PC-3 (cell line): ENCODE measurements at regions of chr19 and their contacts with region 1.

Region 1: DNA sequence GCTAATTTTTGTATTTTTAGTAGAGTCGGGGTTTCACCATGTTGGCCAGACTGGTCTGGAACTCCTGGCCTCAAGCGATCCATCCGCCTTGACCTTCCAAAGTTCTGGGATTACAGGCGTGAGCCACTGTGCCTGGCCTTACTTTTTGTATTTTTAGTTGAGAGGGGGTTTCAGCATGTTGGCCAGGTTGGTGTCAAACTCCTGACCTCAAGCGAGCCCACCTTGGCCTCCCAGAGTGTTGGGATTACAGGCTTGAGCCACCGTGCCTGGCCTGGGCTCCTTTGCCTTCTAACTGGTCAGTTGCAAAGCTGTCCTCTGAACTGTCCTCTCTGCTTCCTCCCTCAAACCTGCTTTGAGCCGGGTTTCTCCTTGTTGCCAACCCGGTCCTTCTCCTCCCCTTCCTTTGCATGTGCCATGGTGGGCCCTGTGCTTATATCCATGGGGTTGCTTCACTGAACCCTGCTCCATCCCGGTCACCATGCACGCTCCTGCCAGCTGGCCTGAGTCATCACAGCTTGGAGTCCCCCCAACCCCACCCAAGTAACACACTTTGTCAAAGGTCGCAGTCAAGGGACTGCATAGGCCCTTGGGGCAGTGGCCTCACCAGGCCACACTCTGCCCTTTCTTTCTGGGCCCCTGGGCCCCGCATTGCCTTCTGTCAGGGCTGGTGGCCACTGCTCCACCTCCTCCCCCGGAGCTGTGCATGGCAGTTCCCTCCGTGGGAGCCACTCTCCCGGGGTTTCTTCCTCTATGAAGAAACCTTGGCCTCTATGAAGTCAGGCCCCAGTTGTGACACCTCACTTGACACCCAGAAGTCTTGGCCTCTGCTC is 21.2 kb downstream of the WTIP start:
- DNase-seq: no peak
- ATAC-seq: no peak
- H3K4me3 ChIP-seq: no peak overlapping the region
- H3K27ac ChIP-seq: no peak overlapping the region
- H3K4me1 ChIP-seq: no peaks in the 10 kb centered on the region
- H3K27me3 ChIP-seq: no peaks in the 10 kb centered on the region
- CTCF ChIP-seq: no peak

Region 2: DNA sequence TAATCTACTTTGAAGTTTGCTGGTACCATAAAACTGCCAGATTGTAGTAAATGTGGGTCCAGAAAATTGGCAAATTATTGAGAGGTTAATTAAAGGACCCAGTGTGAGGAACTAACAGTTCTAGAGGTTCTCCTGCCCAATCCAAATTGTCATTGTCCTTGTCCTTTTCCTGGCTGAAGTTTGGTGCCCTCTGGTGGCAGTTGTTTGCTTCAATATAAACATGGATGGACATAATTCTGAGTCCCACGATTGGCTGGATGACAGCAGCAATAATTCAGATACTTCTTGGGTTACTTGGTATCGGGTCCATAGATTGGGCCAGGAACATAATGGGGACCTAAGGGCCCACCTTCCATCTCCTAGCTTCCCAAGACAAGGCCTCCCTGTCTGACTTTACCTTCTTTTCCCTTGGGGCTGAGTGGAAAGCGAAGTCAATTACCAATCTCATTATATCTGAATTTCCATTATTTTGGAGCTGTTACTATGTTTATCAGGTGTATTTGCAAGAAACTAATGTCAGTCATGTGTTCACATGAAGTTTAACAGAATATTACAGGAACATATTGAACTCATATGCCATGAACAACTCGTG is 282.2 kb before region 1 on chr19:
- CTCF ChIA-PET with region 1: no interaction called
- POLR2A ChIA-PET with region 1: no interaction called
- intact Hi-C with region 1: no loop called
- DNase-seq: peak; percentile 77
- ATAC-seq: no peak
- H3K4me3 ChIP-seq: no peak overlapping the region
- H3K27ac ChIP-seq: no peak overlapping the region
- H3K4me1 ChIP-seq: peaks cover 31% of the 10 kb centered on the region
- H3K27me3 ChIP-seq: no peaks in the 10 kb centered on the region
- CTCF ChIP-seq: peak; percentile 77

Region 3: GRCh38 chr19:34428549-34429285 is 74.1 kb before region 1 on chr19:
- CTCF ChIA-PET with region 1: no interaction called
- POLR2A ChIA-PET with region 1: interaction called, 13 read pairs
- intact Hi-C with region 1: no loop called
- DNase-seq: peak; percentile 9
- ATAC-seq: peak; percentile 63
- H3K4me3 ChIP-seq: peak overlapping the region; percentile 98
- H3K27ac ChIP-seq: peak overlapping the region; percentile 53
- H3K4me1 ChIP-seq: peaks cover 12% of the 10 kb centered on the region; the same call in 1 of the 2 replicates
- H3K27me3 ChIP-seq: no peaks in the 10 kb centered on the region
- CTCF ChIP-seq: no peak